PC-3 (cell line): ENCODE measurements at regions of chr1 and their contacts with region 1.

Region 1: DNA sequence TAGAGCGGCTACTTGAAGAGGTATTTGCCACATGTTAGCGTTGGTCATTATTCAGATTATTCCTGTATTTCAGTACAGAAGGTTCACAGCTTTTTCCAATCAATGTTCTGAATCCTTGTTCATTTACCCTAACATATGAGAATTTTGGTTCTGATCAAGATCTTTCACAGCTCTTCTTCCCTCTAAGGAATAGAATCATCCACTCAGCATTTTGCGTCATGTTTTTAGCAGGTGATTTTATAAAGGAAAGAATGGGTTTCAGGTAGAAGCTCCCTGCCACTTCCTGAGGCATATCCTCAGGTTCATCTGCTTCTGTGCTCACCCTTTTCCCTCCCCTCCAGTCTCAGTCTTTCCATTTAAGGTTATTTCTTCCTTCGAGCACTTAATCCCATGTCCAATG is 66.4 kb downstream of the NPHS2 start:
- DNase-seq: no peak
- ATAC-seq: no peak
- H3K4me3 ChIP-seq: no peak overlapping the region
- H3K27ac ChIP-seq: no peak overlapping the region
- H3K4me1 ChIP-seq: no peaks in the 10 kb centered on the region
- H3K27me3 ChIP-seq: peaks cover 9% of the 10 kb centered on the region; the same call in 1 of the 2 replicates
- CTCF ChIP-seq: no peak

Region 2: DNA sequence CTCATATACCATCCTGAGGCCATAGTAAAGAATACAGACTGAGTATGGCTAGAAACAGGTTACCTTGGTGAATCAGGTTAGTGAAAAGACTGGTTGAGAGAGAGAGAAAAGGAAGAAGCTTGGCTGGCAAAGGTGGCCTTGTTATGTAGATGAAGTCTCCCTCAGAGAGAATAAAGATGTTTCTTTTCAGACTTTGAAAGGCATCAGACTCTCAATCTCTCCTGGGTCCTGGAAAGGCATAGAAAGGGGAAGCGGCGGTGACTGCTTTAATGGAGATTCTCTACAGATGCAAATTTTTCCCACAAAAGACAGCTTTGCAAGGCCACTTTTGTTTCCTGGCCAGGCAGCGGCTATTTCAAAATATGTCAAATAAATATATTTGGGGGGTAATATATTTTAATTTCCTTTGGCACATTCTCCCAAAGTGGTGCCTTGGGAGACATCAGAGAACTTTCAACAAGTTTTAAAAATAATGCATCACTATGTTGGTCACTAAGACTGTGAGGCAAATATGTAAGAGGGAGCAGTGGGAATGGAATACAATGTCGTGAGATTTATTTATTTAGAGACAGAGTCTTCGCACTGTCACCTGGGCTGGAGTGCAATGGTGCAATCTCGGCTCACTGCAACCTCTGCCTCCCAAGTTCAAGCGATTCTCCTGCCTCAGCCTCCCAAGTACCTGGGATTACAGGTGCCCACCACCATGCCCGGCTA is 20.3 kb after region 1 on chr1:
- CTCF ChIA-PET with region 1: no interaction called
- POLR2A ChIA-PET with region 1: no interaction called
- intact Hi-C with region 1: loop called (anchors 2 kb)
- DNase-seq: no peak
- ATAC-seq: no peak
- H3K4me3 ChIP-seq: no peak overlapping the region
- H3K27ac ChIP-seq: no peak overlapping the region
- H3K4me1 ChIP-seq: no peaks in the 10 kb centered on the region
- H3K27me3 ChIP-seq: peaks cover 23% of the 10 kb centered on the region
- CTCF ChIP-seq: no peak

Region 3: GRCh38 chr1:179541774-179542173 is 32.4 kb after region 1 on chr1:
- CTCF ChIA-PET with region 1: no interaction called
- POLR2A ChIA-PET with region 1: no interaction called
- intact Hi-C with region 1: no loop called
- DNase-seq: no peak
- ATAC-seq: no peak
- H3K4me3 ChIP-seq: no peak overlapping the region
- H3K27ac ChIP-seq: no peak overlapping the region
- H3K4me1 ChIP-seq: no peaks in the 10 kb centered on the region
- H3K27me3 ChIP-seq: peaks cover 29% of the 10 kb centered on the region
- CTCF ChIP-seq: no peak

Region 4: DNA sequence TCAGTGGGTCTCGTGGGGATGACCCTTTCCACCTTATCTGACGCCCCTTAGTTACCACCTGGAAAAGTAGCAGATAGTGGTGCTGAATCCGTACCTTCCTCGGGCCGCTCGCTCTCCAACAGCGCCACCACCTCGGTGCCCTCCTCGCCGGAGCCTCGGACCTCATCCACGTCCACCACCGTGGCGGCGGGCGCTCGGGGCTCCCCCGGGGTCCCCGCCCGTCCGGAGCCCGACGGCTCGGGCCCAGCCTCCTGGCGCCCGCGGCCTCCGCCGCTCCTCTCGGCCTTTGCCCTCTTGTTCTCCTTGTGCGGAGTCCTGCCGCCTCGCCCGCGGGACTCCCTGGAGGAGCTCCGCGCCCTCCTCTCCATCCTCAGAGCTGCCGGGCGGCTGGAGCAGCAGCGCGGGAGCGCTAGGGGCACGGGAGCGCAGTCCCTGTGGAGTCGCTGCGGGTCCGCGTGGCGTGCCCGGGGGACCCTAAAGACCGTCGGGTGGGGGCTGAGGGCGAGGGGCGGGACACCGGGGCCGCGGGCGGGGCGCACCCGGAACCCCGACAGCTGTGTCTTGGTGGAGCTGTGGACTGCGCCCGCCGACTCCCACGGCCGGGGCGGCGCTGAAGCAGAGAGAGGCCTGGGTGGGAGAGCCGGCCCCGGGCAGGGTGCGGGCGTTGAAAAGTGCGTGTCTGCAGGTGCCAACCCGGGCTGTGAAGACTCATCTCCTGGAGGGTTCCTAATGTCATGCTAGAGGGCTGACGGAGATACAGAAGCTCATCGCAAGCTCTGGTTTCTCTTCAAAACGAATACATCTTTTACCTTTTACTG is 66.3 kb after region 1 on chr1 and contains the start of gene NPHS2:
- CTCF ChIA-PET with region 1: no interaction called
- POLR2A ChIA-PET with region 1: no interaction called
- intact Hi-C with region 1: no loop called
- DNase-seq: no peak
- ATAC-seq: no peak
- H3K4me3 ChIP-seq: no peak within 1 kb of the TSS
- H3K27ac ChIP-seq: no peak within 1 kb of the TSS
- H3K4me1 ChIP-seq: no peaks in the 10 kb centered on the region
- H3K27me3 ChIP-seq: peaks cover 28% of the 10 kb centered on the region
- CTCF ChIP-seq: no peak
- total RNA-seq, gene NPHS2: not detected in 2 replicates